ENCODE measurements at regions of chr19 and their contacts with region 1.

Region 1: DNA sequence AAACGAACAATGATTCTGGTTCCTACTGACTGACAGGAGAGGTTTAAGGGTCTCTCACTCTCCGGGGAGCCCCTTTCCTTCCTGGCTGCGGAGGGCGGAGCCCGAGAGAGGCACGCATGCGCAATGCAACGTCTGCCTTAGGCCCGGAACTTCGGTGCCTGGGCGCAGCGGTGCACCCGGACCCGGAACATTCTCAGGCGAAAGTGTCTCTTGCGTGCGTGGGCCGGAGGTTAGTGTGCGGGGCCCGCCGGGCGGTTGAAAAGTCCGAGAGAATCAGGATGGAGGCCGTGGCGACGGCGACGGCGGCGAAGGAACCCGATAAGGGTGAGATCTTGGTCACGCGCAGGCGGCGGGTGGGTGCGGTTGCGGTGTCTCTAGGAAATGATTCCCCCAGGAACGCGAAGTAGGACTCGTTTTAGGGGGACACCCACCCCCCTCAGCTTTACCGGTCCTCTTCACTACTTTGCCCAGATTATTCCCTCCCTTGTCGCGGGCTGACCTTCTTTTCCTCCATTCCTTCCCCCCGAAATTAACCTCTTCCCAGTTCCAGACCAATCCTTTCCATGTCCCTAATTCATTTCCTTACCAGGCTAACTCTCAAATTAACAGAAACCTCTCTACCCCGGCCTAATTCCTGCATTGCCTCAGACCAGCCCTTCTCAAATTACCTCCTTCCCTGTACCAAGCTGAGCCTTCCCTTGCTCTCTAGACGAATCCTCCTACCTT is at the start of gene CCDC97:
- DNase-seq: peak; percentile 78 to 96 (median 90)
- ATAC-seq: peak; percentile 61
- H3K4me3 ChIP-seq: peak within 1 kb of the TSS; percentile 66 to 91
- H3K4me3 Mint-ChIP-seq: peak within 1 kb of the TSS; percentile 97
- H3K27ac ChIP-seq: peak within 1 kb of the TSS; percentile 88 to 93
- H3K27ac Mint-ChIP-seq: peak within 1 kb of the TSS; percentile 98
- H3K4me1 ChIP-seq: peaks cover 58% of the 10 kb centered on the region
- H3K4me1 Mint-ChIP-seq: peaks cover 74% of the 10 kb centered on the region
- H3K27me3 ChIP-seq: no peaks in the 10 kb centered on the region
- H3K27me3 Mint-ChIP-seq: no peaks in the 10 kb centered on the region
- CTCF ChIP-seq: no peak
- total RNA-seq, gene CCDC97: 32.0 to 33.5 TPM

Region 2: GRCh38 chr19:41123716-41124294 is 186.4 kb before region 1 on chr19:
- CTCF ChIA-PET with region 1: interaction called, 4 read pairs
- POLR2A ChIA-PET with region 1: no interaction called
- intact Hi-C with region 1: loop called in 1 of 2 experiments (anchors 5 kb)
- DNase-seq: peak in 1 of 9 experiments; percentile 20
- ATAC-seq: no peak
- H3K4me3 ChIP-seq: no peak overlapping the region
- H3K4me3 Mint-ChIP-seq: no peak overlapping the region
- H3K27ac ChIP-seq: no peak overlapping the region
- H3K27ac Mint-ChIP-seq: peak overlapping the region; percentile 41
- H3K4me1 ChIP-seq: peaks cover 23% of the 10 kb centered on the region
- H3K4me1 Mint-ChIP-seq: peaks cover 44% of the 10 kb centered on the region
- H3K27me3 ChIP-seq: no peaks in the 10 kb centered on the region
- H3K27me3 Mint-ChIP-seq: no peaks in the 10 kb centered on the region
- CTCF ChIP-seq: no peak

Region 3: DNA sequence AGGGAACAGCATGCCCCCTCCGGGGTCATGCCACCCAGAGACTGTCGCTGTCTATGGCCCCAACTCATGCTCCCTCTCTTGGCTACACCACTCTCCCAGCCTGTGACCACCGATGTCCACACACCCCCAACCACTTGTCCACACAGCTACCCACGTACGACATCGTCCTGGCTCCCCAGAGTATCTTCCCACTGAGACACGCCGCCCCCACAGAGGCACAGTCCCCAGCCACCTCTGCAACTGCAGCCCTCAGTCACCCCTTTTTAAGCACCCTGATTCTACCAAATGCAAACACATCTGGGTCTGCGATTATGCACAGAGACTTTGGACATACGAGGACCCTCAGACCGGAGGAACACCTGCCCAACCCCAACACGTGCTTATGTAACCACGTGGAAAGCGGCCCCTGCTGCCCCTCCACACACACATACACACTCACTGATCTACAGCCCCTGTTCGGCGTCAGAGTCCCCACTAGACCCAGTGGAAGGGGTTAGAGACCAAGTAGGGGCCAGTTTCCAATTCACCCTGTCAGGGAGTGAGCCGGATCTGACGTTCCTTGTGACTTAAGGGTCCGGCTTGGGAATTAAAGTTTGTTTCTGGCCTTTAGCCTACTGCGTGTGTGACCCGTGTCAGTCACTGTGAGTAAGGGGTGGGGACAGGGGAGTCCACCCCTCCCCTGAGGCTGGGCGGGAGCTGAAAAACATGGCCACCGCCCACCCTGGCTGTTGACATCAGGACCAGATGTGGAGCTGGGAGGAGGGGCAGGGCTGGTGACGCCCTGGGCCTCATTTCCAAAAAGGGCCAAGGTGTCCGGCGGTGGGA is 103.1 kb before region 1 on chr19:
- CTCF ChIA-PET with region 1: interaction called, 105 read pairs
- POLR2A ChIA-PET with region 1: interaction called, 22 read pairs
- intact Hi-C with region 1: loop called (anchors 1 kb)
- DNase-seq: no peak
- ATAC-seq: no peak
- H3K4me3 ChIP-seq: no peak overlapping the region
- H3K4me3 Mint-ChIP-seq: no peak overlapping the region
- H3K27ac ChIP-seq: no peak overlapping the region
- H3K27ac Mint-ChIP-seq: no peak overlapping the region
- H3K4me1 ChIP-seq: no peaks in the 10 kb centered on the region
- H3K4me1 Mint-ChIP-seq: peaks cover 6% of the 10 kb centered on the region
- H3K27me3 ChIP-seq: no peaks in the 10 kb centered on the region
- H3K27me3 Mint-ChIP-seq: no peaks in the 10 kb centered on the region
- CTCF ChIP-seq: no peak

Region 4: GRCh38 chr19:41298348-41298964 is 11.7 kb before region 1 on chr19:
- CTCF ChIA-PET with region 1: interaction called, 19 read pairs
- POLR2A ChIA-PET with region 1: interaction called, 7 read pairs
- intact Hi-C with region 1: no loop called
- DNase-seq: peak in 6 of 9 experiments; percentile 46 to 84 (median 68)
- ATAC-seq: peak; percentile 10
- H3K4me3 ChIP-seq: no peak overlapping the region
- H3K4me3 Mint-ChIP-seq: peak overlapping the region; percentile 19
- H3K27ac ChIP-seq: peak overlapping the region; percentile 37 to 75
- H3K27ac Mint-ChIP-seq: peak overlapping the region; percentile 89
- H3K4me1 ChIP-seq: peaks cover 75% of the 10 kb centered on the region
- H3K4me1 Mint-ChIP-seq: peaks cover 79% of the 10 kb centered on the region
- H3K27me3 ChIP-seq: no peaks in the 10 kb centered on the region
- H3K27me3 Mint-ChIP-seq: no peaks in the 10 kb centered on the region
- CTCF ChIP-seq: no peak

Region 5: GRCh38 chr19:41327576-41328156 is 17.5 kb after region 1 on chr19:
- CTCF ChIA-PET with region 1: interaction called, 14 read pairs
- POLR2A ChIA-PET with region 1: interaction called, 5 read pairs
- intact Hi-C with region 1: loop called in 1 of 2 experiments (anchors 1 kb)
- DNase-seq: peak in 8 of 9 experiments; percentile 68 to 98 (median 82)
- ATAC-seq: no peak
- H3K4me3 ChIP-seq: peak overlapping the region; percentile 21 to 23
- H3K4me3 Mint-ChIP-seq: peak overlapping the region; percentile 74
- H3K27ac ChIP-seq: peak overlapping the region; percentile 50 to 78
- H3K27ac Mint-ChIP-seq: peak overlapping the region; percentile 98
- H3K4me1 ChIP-seq: peaks cover 63% of the 10 kb centered on the region
- H3K4me1 Mint-ChIP-seq: peaks cover 69% of the 10 kb centered on the region
- H3K27me3 ChIP-seq: no peaks in the 10 kb centered on the region
- H3K27me3 Mint-ChIP-seq: no peaks in the 10 kb centered on the region
- CTCF ChIP-seq: no peak